ENCODE measurements at regions of chr14 and their contacts with region 1.

Region 1: GRCh38 chr14:22852940-22853767 is 16.8 kb downstream of the MMP14 start:
- DNase-seq: no peak
- H3K4me3 ChIP-seq: peak overlapping the region; percentile 59
- CTCF ChIP-seq: peak; percentile 93

Region 2: GRCh38 chr14:22589096-22589839 is 263.9 kb before region 1 on chr14 and contains the start of gene DAD1:
- CTCF ChIA-PET with region 1: interaction called, 15 read pairs
- POLR2A ChIA-PET with region 1: interaction called, 5 read pairs
- DNase-seq: peak; percentile 97
- H3K4me3 ChIP-seq: peak within 1 kb of the TSS; percentile 89
- CTCF ChIP-seq: no peak

Region 3: DNA sequence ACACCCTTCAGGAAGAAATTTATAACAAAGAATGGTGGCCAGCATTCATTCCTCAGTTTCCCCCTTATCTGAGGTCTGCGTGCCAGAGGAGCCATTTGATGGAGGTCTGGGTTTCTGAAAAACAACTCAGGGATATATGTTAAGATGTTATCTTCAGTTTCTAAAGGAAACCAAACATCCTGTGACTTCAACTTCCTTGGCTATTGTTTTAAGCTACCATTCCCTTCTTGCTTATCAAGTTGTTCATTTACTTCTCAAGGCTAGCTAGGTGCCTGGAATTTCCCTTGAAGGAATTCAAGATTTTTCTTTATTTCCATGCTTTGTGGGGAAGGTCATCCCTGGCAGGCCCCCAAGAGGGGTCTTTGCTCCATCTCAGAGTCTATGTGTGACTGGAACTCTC is 113.7 kb before region 1 on chr14:
- CTCF ChIA-PET with region 1: no interaction called
- POLR2A ChIA-PET with region 1: no interaction called
- DNase-seq: no peak
- H3K4me3 ChIP-seq: no peak overlapping the region
- CTCF ChIP-seq: no peak

Region 4: DNA sequence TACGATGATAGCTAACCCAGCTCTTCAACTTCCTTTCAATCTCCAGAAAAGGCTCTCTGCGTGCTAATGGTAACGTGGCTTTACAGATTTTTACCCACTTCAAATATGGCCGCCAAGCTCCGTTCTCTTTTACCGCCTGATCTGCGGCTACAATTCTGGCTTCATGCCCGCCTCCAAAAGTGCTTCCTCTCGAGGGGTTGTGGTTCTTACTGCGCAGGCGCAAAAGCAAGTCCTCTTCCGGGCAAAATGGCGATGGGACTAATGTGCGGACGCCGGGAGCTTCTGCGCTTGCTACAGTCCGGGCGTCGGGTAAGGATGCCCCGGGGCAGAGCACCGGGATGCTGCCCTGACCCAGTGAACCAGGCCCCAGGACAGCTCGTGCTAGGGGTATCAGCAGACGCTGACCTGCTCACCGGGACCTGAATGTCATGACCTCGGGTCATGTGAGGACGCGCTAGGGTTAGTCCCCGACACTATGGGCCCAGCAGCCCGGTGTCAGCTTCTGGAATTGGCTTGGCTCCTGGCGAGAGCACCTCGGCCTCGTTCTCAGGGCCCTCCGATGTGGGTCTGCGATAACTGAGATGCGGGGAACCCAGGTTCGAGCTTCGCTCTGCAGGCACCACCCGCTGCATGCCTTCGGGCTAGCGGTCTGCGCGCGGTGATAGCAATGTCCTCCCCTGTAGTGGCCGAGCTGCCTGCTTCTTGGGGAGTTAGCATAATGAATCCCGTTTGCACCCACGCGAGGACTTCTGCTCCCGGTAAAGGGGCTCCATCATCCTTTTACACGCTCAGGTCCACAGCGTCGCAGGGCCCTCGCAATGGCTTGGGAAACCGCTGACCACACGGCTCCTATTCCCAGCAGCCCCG is 86.5 kb before region 1 on chr14 and contains the start of gene OXA1L:
- CTCF ChIA-PET with region 1: interaction called, 31 read pairs
- POLR2A ChIA-PET with region 1: interaction called, 5 read pairs
- DNase-seq: peak; percentile 86
- H3K4me3 ChIP-seq: peak within 1 kb of the TSS; percentile 99
- CTCF ChIP-seq: no peak

Region 5: DNA sequence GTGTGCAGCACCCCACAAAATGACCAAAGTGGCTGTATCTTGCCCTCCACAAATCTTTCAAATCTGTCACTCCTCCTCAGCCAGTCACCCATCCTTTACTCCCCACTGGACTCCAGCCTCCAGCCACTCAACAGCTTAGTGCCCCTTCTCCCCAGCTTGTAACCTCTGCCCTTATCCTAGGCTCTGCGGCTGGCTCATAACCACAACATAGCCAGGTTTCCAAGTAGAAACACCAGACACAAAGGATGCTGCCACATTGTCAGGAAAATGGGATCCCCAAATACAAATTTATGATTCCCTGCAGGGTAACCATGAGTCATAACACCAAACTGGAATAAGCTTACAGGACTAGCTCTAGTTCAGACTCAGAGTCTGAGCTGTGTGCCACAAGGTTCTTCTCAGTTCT is 71.6 kb before region 1 on chr14:
- CTCF ChIA-PET with region 1: interaction called, 89 read pairs
- POLR2A ChIA-PET with region 1: interaction called, 3 read pairs
- DNase-seq: no peak
- H3K4me3 ChIP-seq: no peak overlapping the region
- CTCF ChIP-seq: no peak

Region 6: DNA sequence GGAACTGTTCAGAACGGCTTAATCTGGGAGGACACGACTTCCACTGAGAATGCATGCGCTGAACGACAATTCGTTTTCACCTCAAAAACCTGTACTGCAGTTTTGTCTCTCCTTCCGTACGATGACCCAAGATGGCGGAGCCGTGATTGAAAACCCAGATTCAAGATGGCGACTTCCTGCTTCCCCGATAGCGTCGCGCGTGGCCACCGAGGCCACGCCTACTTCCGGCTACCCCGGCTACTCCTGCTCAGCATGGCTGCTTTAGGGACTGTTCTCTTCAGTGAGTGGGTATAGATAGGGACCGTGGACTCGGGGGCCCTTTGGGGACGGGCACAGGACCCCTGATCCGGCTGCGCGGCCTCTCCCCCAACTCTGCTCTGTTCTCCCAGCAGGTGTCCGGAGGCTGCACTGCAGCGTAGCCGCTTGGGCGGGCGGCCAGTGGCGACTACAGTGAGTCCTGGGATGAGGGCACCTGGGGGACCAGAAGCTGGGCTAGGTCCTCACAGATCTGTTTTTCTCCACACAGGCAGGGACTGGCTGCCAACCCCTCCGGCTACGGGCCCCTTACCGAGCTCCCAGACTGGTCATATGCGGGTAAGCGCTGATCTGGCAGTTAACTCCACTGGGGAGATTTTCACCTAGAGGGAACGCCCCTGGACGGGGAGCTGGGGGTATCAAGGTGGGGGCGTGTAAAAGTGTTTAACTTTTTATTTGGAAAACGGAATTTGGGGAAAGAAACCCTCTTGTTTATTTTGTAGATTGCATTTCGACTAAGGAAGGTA is 23.3 kb before region 1 on chr14 and contains the start of gene MRPL52:
- CTCF ChIA-PET with region 1: interaction called, 272 read pairs
- POLR2A ChIA-PET with region 1: interaction called, 158 read pairs
- DNase-seq: no peak
- H3K4me3 ChIP-seq: peak within 1 kb of the TSS; percentile 94
- CTCF ChIP-seq: no peak

Region 7: GRCh38 chr14:22865424-22866405 is 12.6 kb after region 1 on chr14:
- CTCF ChIA-PET with region 1: interaction called, 96 read pairs
- POLR2A ChIA-PET with region 1: interaction called, 3 read pairs
- DNase-seq: no peak
- H3K4me3 ChIP-seq: no peak overlapping the region
- CTCF ChIP-seq: peak; percentile 17

Region 8: DNA sequence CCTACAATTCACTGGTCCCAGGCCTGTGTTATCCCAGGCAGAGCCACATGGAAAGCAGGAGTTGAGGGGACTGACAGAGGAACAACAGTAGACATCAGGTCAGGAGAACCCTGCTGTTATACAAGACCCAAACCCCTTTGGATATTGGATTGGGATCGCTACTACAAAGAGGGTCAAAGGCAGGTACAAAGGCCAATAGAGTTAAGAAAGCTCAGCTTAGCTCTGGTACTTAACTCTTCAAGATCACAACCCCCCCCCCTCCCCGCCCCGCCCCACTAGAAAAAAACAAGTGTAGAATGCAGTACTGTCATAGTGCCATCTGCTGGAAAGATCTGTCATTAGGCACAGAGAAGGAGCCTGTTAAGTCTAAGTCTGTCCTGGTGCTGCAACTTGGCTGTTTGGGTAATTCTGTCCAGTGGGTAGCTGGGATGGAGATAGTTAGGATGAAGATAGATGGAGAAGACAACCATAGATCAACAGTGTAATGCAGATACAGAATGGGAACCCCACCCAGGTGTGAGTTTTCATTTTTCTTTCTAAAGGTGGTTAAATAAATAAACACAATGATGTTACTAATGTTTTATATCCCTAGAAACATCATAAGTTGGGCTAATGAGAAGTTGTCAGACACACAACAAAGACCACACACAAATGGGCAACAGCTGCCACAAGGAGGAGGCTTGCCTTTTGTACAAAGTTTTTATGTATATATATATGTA is 47.1 kb after region 1 on chr14:
- CTCF ChIA-PET with region 1: interaction called, 72 read pairs
- POLR2A ChIA-PET with region 1: interaction called, 3 read pairs
- DNase-seq: no peak
- H3K4me3 ChIP-seq: no peak overlapping the region
- CTCF ChIP-seq: peak; percentile 72

Measured in AG04449 (cell line).